ENCODE measurements at regions of chr11 and their contacts with region 1.

Region 1: GRCh38 chr11:126716456-126717083 is 284.0 kb downstream of the KIRREL3 start:
- DNase-seq: peak; percentile 61
- ATAC-seq: no peak
- H3K4me3 Mint-ChIP-seq: no peak overlapping the region
- H3K27ac Mint-ChIP-seq: no peak overlapping the region
- H3K4me1 Mint-ChIP-seq: no peaks in the 10 kb centered on the region
- H3K27me3 Mint-ChIP-seq: peaks cover 8% of the 10 kb centered on the region
- CTCF ChIP-seq: peak; percentile 37

Region 2: DNA sequence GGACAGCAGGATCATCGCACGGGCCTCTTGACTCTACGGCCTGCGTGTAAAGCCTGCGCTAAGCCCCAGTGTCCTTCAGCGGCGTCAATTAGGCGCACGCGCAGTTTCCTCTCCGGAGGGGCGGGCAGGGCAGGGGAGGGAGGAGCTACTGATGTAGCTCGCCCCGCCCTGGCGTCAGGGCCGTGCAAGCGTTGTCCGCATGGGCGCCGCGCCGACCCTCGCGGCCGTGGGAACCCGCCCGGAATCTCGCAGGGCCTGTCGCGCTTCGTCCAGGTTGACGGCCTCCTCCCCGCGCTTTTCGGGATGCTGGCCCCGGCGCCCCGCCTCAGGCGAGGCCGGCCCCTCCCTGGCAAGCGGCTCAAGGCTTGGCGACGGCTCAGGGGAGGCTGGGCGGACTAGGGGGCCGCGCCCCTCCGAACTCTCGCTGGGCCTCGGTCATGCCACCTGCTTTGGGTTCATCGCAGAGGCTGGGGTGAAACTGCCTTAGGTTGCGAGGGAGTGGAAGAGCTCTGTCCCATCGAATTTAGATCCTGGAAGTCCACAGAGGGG is 300.0 kb before region 1 on chr11:
- CTCF ChIA-PET with region 1: no interaction called
- POLR2A ChIA-PET with region 1: no interaction called
- intact Hi-C with region 1: no loop called
- DNase-seq: peak; percentile 83
- ATAC-seq: peak; percentile 100
- H3K4me3 Mint-ChIP-seq: peak overlapping the region; percentile 54
- H3K27ac Mint-ChIP-seq: peak overlapping the region; percentile 55
- H3K4me1 Mint-ChIP-seq: peaks cover 19% of the 10 kb centered on the region
- H3K27me3 Mint-ChIP-seq: peaks cover 4% of the 10 kb centered on the region
- CTCF ChIP-seq: no peak

Region 3: DNA sequence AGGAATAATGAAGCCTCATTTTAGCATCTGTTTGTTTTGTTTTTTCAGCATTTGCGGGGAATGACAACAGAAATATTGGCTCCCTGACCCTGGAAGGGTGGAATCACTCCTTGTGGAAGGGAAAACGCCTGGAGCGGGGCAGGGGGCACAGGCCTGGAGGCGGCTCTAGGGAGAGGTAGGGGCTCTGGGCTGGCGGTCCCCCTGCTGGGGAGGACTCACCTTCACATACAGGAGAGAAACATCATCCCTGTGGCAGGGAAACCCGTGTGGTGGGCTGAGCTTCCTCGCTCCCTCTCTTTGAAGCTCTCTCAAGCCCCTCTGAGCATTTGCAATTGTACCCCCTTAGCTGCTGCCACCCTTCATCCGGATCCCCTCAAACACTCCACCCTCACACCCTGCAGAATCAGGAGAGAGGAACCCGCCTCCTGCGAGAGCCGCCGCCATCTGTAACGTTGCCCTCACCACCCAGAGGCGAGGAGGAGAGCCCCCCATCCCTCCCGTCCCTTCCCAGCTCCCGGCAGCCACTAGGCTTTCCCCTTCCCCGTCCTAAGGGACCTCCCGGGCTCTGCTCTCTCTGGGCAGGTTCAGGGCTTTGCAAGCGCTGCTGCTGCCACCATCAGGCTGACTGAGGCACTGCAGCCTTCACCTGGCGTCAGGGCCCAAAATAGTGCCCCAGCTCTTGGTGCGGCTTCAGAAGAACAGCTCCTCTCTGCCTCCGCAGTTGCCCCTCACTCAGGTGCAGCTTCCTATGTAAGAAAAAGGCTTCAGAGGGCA is 273.6 kb after region 1 on chr11:
- CTCF ChIA-PET with region 1: interaction called, 13 read pairs
- POLR2A ChIA-PET with region 1: no interaction called
- intact Hi-C with region 1: loop called (anchors 5 kb)
- DNase-seq: peak; percentile 68
- ATAC-seq: peak; percentile 84
- H3K4me3 Mint-ChIP-seq: no peak overlapping the region
- H3K27ac Mint-ChIP-seq: no peak overlapping the region
- H3K4me1 Mint-ChIP-seq: no peaks in the 10 kb centered on the region
- H3K27me3 Mint-ChIP-seq: peaks cover 16% of the 10 kb centered on the region
- CTCF ChIP-seq: peak; percentile 84

Measured in activated CD8-positive, alpha-beta T cell treated with anti-CD3 and anti-CD28 coated beads for 36 hours (primary cell).